Activated CD4-positive, alpha-beta memory T cell treated with anti-CD3 and anti-CD28 coated beads for 36 hours (primary cell): ENCODE measurements at regions of chr1 and their contacts with region 1.

Region 1: GRCh38 chr1:192808518-192809306 is at the start of gene RGS2:
- DNase-seq: peak; percentile 91
- H3K4me3 Mint-ChIP-seq: peak within 1 kb of the TSS; percentile 83
- H3K27ac Mint-ChIP-seq: peak within 1 kb of the TSS; percentile 77
- H3K4me1 Mint-ChIP-seq: peaks cover 32% of the 10 kb centered on the region
- H3K27me3 Mint-ChIP-seq: no peaks in the 10 kb centered on the region
- total RNA-seq, gene RGS2: 5.4 to 6.4 TPM

Region 2: DNA sequence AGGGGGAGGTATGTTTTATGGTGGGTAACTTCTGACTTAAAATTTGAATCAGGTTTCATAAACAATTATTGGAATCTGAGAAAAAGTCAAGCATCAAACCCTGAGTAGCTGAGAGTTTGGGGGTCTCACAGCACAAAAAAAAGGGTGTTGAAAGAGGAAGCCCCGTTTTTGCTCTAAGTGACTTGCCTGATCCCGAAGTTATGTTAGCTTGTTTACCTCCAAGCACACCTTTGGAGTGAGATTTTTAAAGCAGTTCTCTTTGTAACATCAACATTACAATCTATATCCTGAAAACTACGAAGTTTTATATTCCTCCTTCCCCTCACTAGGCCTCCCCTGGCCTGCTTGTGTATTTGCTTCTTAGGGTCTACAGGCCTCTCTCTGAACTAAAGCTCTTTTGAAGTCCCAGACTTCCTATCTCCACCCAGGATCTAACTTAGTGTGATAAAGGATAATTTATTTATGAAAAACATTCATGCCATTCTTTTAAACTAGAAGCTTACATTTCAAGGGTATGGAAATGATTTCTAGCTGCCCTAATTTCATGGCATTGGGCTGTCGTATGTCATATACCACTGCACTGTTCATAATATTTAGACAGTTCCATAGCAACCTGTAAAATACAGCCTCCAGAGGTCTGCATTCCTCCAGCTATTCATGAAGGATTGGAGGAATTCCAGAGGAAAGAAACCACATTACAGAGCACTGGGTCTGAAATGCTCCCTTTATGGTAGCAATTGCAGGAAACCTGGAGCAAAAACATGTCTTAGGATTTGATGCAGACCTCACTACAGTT is 269.2 kb before region 1 on chr1:
- CTCF ChIA-PET with region 1: no interaction called
- POLR2A ChIA-PET with region 1: no interaction called
- intact Hi-C with region 1: loop called (anchors 2 kb)
- DNase-seq: no peak
- H3K4me3 Mint-ChIP-seq: no peak overlapping the region
- H3K27ac Mint-ChIP-seq: peak overlapping the region; percentile 63
- H3K4me1 Mint-ChIP-seq: peaks cover 49% of the 10 kb centered on the region
- H3K27me3 Mint-ChIP-seq: no peaks in the 10 kb centered on the region

Region 3: GRCh38 chr1:192609110-192610079 is 199.3 kb before region 1 on chr1:
- CTCF ChIA-PET with region 1: interaction called, 3 read pairs
- POLR2A ChIA-PET with region 1: no interaction called
- intact Hi-C with region 1: loop called (anchors 5 kb)
- DNase-seq: peak; percentile 75
- H3K4me3 Mint-ChIP-seq: peak overlapping the region; percentile 28
- H3K27ac Mint-ChIP-seq: no peak overlapping the region
- H3K4me1 Mint-ChIP-seq: peaks cover 17% of the 10 kb centered on the region
- H3K27me3 Mint-ChIP-seq: no peaks in the 10 kb centered on the region

Region 4: GRCh38 chr1:192700834-192701271 is 107.9 kb before region 1 on chr1:
- CTCF ChIA-PET with region 1: no interaction called
- POLR2A ChIA-PET with region 1: no interaction called
- intact Hi-C with region 1: loop called (anchors 5 kb)
- DNase-seq: no peak
- H3K4me3 Mint-ChIP-seq: no peak overlapping the region
- H3K27ac Mint-ChIP-seq: no peak overlapping the region
- H3K4me1 Mint-ChIP-seq: peaks cover 23% of the 10 kb centered on the region
- H3K27me3 Mint-ChIP-seq: no peaks in the 10 kb centered on the region

Region 5: GRCh38 chr1:193019442-193020026 is 210.8 kb after region 1 on chr1:
- CTCF ChIA-PET with region 1: interaction called, 105 read pairs
- POLR2A ChIA-PET with region 1: no interaction called
- intact Hi-C with region 1: loop called (anchors 1 kb)
- DNase-seq: no peak
- H3K4me3 Mint-ChIP-seq: no peak overlapping the region
- H3K27ac Mint-ChIP-seq: no peak overlapping the region
- H3K4me1 Mint-ChIP-seq: no peaks in the 10 kb centered on the region
- H3K27me3 Mint-ChIP-seq: no peaks in the 10 kb centered on the region

Region 6: DNA sequence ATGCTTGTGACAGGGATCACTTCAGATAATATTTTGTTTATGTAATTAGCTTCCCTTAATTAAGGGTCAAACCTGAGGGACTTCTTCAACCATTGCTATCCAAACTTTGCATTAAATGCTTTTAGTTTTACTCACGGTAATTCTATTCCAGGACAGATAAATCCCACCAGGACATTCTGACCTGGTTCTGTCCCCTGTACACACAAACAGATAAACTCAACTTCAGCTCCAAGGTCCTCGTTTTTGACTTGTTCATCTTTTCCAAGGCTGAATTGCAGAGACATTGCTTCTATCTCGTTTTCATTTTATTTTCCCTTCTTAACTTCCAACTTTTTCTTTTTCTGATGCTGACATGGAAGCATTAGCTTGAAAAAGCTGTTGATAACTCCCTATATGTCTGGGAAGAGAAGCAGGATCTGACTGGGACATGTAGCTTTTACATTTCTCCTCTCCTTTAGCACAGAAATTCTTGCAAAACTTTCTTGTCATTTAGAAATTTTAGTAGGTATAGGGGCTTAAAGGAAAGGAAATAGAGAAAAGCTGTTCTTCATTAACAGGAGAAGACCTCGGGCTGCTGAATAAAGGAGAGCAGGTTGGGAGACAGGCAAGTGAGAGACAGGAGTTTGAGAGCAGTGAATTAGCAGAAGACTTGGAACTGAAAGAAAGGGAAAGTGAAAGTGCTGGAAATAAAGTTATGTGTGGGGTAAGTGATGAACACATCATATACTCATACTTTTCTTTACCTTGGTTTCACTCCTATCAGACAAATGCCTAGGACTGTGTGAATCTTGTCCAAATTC is 609.4 kb after region 1 on chr1:
- CTCF ChIA-PET with region 1: no interaction called
- POLR2A ChIA-PET with region 1: no interaction called
- intact Hi-C with region 1: loop called (anchors 5 kb)
- DNase-seq: no peak
- H3K4me3 Mint-ChIP-seq: peak overlapping the region; percentile 21
- H3K27ac Mint-ChIP-seq: peak overlapping the region; percentile 24
- H3K4me1 Mint-ChIP-seq: peaks cover 30% of the 10 kb centered on the region
- H3K27me3 Mint-ChIP-seq: no peaks in the 10 kb centered on the region